Dendritic cell treated with granulocyte-macrophage colony-stimulating factor and Interleukin-4, amounts not matched to agents 40 ng/mL and 50 ng/mL, for 4 days (primary cell): ENCODE measurements at regions of chr12 and their contacts with region 1.

Region 1: GRCh38 chr12:70590051-70590450 is 47.2 kb downstream of the PTPRB start:
- H3K4me3 Mint-ChIP-seq: no peak overlapping the region
- H3K27ac Mint-ChIP-seq: no peak overlapping the region
- H3K4me1 Mint-ChIP-seq: no peaks in the 10 kb centered on the region
- H3K27me3 Mint-ChIP-seq: no peaks in the 10 kb centered on the region

Region 2: GRCh38 chr12:70606001-70606400 is 15.9 kb after region 1 on chr12:
- intact Hi-C with region 1: no loop called
- H3K4me3 Mint-ChIP-seq: no peak overlapping the region
- H3K27ac Mint-ChIP-seq: no peak overlapping the region
- H3K4me1 Mint-ChIP-seq: peaks cover 5% of the 10 kb centered on the region
- H3K27me3 Mint-ChIP-seq: peaks cover 29% of the 10 kb centered on the region

Region 3: GRCh38 chr12:71746983-71747611 is 1157.0 kb after region 1 on chr12:
- intact Hi-C with region 1: loop called (anchors 10 kb)
- H3K4me3 Mint-ChIP-seq: no peak overlapping the region
- H3K27ac Mint-ChIP-seq: no peak overlapping the region
- H3K4me1 Mint-ChIP-seq: no peaks in the 10 kb centered on the region
- H3K27me3 Mint-ChIP-seq: peaks cover 11% of the 10 kb centered on the region